ENCODE measurements at regions of chr12 and their contacts with region 1.

Region 1: DNA sequence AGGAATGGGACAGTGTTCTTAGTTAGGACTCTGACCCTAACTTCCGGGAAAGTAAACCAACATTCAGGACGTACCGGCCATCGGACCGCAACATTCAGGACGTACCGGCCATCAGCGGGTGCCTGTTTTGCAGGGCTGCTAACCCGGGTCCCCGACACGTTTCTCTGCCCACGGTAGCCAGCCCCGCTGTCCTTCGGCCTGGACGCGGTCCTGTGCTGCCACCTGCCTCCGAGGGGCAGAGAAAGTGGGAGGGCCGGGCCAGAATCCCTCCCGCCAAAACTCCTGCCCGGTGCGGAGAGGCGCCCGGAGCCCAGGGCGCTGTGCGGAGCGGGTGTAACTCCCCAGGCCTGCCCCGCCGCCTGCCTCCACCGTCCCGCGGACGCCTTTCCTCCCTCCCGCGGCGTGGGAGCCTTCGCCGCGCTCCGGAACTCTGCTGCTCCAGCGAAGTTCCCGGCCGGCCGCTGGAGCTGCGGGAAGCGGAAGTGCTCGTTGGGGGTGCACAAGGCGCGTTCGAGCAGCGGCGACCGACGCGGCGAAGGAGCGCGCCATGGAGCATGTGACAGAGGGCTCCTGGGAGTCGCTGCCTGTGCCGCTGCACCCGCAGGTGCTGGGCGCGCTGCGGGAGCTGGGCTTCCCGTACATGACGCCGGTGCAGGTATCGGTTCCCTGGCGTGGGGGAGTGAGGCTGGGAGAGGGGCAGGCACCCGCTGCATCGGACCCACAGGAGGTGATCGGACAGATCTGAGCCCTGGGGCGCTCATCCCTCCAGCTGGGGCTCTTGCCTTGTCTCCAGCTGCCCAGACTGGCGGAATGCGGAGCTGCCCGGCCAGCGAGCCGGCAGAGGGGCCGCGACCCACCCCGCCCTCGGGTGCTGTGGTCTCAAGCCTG is at the start of gene DDX55:
- DNase-seq: peak; percentile 88
- H3K4me3 Mint-ChIP-seq: peak within 1 kb of the TSS; percentile 86
- H3K27ac Mint-ChIP-seq: peak within 1 kb of the TSS; percentile 87
- H3K4me1 Mint-ChIP-seq: peaks cover 47% of the 10 kb centered on the region
- H3K27me3 Mint-ChIP-seq: no peaks in the 10 kb centered on the region
- total RNA-seq, gene DDX55: 26.8 to 26.9 TPM

Region 2: GRCh38 chr12:123365025-123365917 is 236.6 kb before region 1 on chr12:
- CTCF ChIA-PET with region 1: interaction called, 3 read pairs
- POLR2A ChIA-PET with region 1: interaction called, 13 read pairs
- DNase-seq: peak; percentile 98
- H3K4me3 Mint-ChIP-seq: peak overlapping the region; percentile 82
- H3K27ac Mint-ChIP-seq: peak overlapping the region; percentile 96
- H3K4me1 Mint-ChIP-seq: peaks cover 18% of the 10 kb centered on the region
- H3K27me3 Mint-ChIP-seq: no peaks in the 10 kb centered on the region

Region 3: GRCh38 chr12:123388177-123388947 is 213.5 kb before region 1 on chr12:
- CTCF ChIA-PET with region 1: interaction called, 3 read pairs
- POLR2A ChIA-PET with region 1: interaction called, 10 read pairs
- DNase-seq: peak; percentile 80
- H3K4me3 Mint-ChIP-seq: peak overlapping the region; percentile 78
- H3K27ac Mint-ChIP-seq: peak overlapping the region; percentile 91
- H3K4me1 Mint-ChIP-seq: peaks cover 54% of the 10 kb centered on the region
- H3K27me3 Mint-ChIP-seq: no peaks in the 10 kb centered on the region

Region 4: DNA sequence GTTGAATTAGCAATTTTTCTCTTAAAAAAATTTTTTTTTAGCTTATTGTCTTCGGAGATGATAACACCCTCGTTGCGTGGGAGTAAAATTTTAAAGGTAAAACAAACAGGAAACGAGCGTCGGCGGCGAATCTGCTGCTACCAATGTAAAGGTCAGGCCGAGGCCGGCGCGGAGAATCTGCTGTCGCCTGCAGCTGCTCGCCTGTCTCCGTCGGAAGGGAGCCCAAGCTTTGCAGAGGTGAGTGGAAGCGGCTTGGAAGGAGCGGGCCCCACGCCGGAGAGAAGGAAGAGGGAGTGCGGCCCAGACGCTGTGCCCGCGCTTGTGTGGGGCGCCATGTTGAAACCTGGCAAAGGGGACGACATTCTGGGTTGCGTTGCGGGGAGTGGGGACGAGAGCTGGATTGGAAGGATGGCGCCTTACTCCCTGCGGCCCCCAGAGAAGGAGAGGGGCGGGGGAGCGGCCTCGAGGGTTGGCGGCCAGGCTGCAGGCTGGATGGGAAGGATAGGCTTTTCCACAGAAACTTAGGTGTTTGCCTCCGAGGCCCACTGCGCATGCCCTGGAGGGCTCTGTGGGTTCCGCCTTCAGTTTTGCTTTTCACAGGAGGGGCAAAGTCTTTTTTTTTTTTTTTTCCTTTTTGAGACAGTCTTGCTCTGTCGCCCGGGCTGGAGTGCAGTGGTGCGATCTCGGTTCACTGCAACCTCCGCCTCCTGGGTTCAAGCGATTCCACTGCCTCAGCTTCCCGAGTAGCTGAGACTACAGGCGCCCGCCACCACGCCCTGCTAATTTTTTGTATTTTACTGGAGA is 143.7 kb before region 1 on chr12 and contains the start of gene SNRNP35:
- CTCF ChIA-PET with region 1: no interaction called
- POLR2A ChIA-PET with region 1: interaction called, 11 read pairs
- DNase-seq: peak; percentile 86
- H3K4me3 Mint-ChIP-seq: peak within 1 kb of the TSS; percentile 94
- H3K27ac Mint-ChIP-seq: peak within 1 kb of the TSS; percentile 99
- H3K4me1 Mint-ChIP-seq: peaks cover 23% of the 10 kb centered on the region
- H3K27me3 Mint-ChIP-seq: no peaks in the 10 kb centered on the region
- total RNA-seq, gene SNRNP35: 29.7 to 35.0 TPM

Region 5: GRCh38 chr12:123614531-123614930 is 12.7 kb after region 1 on chr12:
- CTCF ChIA-PET with region 1: interaction called, 11 read pairs
- POLR2A ChIA-PET with region 1: interaction called, 10 read pairs
- DNase-seq: no peak
- H3K4me3 Mint-ChIP-seq: no peak overlapping the region
- H3K27ac Mint-ChIP-seq: no peak overlapping the region
- H3K4me1 Mint-ChIP-seq: peaks cover 3% of the 10 kb centered on the region
- H3K27me3 Mint-ChIP-seq: no peaks in the 10 kb centered on the region

Region 6: DNA sequence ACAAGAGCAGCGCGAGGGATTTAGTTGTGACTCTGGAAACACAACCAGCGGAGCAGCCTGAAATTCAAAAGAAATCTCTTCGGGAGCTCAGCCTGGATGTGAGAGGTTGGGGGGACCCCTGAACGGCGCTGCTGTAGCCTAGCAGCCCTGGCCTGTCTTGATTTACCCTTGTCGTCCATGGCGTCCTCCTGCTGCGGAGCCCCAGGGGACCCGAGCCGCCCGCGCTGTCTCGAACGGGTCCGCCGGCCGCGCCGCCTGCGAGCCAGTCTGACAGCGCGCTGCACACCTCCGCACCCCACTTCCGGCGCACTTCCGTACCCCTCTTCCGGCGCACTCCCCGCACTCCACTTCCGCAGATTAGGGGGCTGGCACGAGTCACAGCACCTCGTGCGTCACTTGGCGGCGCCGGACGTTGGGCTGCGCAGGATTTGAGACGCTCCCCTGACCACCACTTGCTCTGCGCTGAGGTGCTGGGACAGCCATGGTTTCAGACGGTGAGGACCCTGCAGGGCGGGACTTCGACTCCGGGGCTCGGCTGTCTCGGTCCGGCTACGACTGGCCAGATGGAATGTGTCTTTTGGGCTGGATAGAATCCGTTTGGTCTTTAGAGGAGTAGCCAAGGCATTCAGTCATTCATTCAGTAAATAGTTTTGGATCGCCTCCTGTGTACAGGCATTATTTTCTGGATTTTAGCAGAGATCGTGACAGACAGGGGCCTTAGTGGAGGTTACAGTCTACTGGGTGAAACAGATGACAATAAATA is 31.7 kb after region 1 on chr12 and contains the starts of genes EIF2B1 and GTF2H3:
- CTCF ChIA-PET with region 1: interaction called, 3 read pairs
- POLR2A ChIA-PET with region 1: interaction called, 28 read pairs
- DNase-seq: peak; percentile 98
- H3K4me3 Mint-ChIP-seq: peak within 1 kb of the TSS; percentile 93
- H3K27ac Mint-ChIP-seq: peak within 1 kb of the TSS; percentile 82
- H3K4me1 Mint-ChIP-seq: peaks cover 31% of the 10 kb centered on the region
- H3K27me3 Mint-ChIP-seq: no peaks in the 10 kb centered on the region
- total RNA-seq, gene EIF2B1: 55.9 to 57.0 TPM
- total RNA-seq, gene GTF2H3: 36.6 to 40.3 TPM

Region 7: DNA sequence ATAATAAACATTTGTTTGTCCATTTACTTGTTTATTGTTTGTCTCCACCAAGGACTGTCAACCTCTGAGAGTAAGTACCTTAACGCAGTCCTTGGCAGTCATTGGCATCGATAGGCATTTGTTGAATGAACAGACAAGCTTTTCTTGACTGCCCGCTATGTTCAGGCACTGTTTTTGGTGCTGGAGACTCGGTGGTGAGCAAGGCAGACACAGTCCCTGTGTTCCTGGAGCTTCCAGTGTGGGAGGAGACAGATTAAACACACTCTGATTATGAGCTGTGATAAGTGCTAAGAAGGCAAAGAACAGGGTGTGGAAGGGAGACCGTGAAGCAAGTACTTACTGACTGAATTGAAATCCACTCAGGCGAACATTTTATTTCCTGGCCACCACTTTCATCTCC is 111.6 kb after region 1 on chr12:
- CTCF ChIA-PET with region 1: no interaction called
- POLR2A ChIA-PET with region 1: interaction called, 14 read pairs
- DNase-seq: peak; percentile 22
- H3K4me3 Mint-ChIP-seq: peak overlapping the region; percentile 89
- H3K27ac Mint-ChIP-seq: peak overlapping the region; percentile 81
- H3K4me1 Mint-ChIP-seq: peaks cover 40% of the 10 kb centered on the region
- H3K27me3 Mint-ChIP-seq: no peaks in the 10 kb centered on the region

Measured in activated CD4-positive, alpha-beta memory T cell treated with anti-CD3 and anti-CD28 coated beads, Interleukin-2, amount 10 ng/mL, durations not matched to agents 7 days and 5 days (primary cell).